ENCODE measurements at regions of chr15 and their contacts with region 1.

Region 1: GRCh38 chr15:98070137-98070536 is 109.6 kb downstream of the ARRDC4 start:
- DNase-seq: no peak
- H3K4me3 ChIP-seq: no peak overlapping the region
- H3K27ac ChIP-seq: no peak overlapping the region
- H3K4me1 ChIP-seq: no peaks in the 10 kb centered on the region
- H3K27me3 ChIP-seq: no peaks in the 10 kb centered on the region
- CTCF ChIP-seq: no peak
- POLR2A ChIP-seq: no peak

Region 2: DNA sequence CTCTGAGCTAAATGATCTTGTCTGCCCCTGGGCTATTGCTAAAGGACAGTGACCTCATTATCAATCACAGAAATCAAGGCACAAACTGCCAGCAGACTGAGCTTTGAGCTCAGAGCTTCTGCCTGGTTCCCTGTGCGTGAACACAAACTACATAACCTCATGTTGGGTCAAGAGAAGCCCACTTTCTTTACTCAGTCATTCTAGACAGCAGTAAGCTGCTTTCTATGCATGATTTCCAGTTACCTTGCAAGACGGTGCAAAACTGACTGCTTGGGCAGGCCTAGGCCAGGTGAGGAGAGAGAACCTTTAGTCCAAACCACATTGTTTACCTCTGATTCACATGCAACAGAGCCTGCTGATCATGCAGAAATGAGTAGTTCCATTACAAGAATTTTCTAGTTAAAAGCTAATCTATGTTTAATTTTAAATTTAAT is 34.5 kb before region 1 on chr15:
- intact Hi-C with region 1: loop called in 1 of 2 experiments (anchors 5 kb)
- DNase-seq: no peak
- H3K4me3 ChIP-seq: no peak overlapping the region
- H3K27ac ChIP-seq: no peak overlapping the region
- H3K4me1 ChIP-seq: no peaks in the 10 kb centered on the region
- H3K27me3 ChIP-seq: no peaks in the 10 kb centered on the region
- CTCF ChIP-seq: no peak
- POLR2A ChIP-seq: no peak

Region 3: GRCh38 chr15:98226578-98226977 is 156.4 kb after region 1 on chr15:
- intact Hi-C with region 1: no loop called
- DNase-seq: no peak
- H3K4me3 ChIP-seq: no peak overlapping the region
- H3K27ac ChIP-seq: no peak overlapping the region
- H3K4me1 ChIP-seq: no peaks in the 10 kb centered on the region
- H3K27me3 ChIP-seq: no peaks in the 10 kb centered on the region
- CTCF ChIP-seq: no peak
- POLR2A ChIP-seq: no peak

Region 4: GRCh38 chr15:98308117-98308516 is 238.0 kb after region 1 on chr15:
- intact Hi-C with region 1: no loop called
- DNase-seq: no peak
- H3K4me3 ChIP-seq: no peak overlapping the region
- H3K27ac ChIP-seq: no peak overlapping the region
- H3K4me1 ChIP-seq: no peaks in the 10 kb centered on the region
- H3K27me3 ChIP-seq: peaks cover 17% of the 10 kb centered on the region
- CTCF ChIP-seq: no peak
- POLR2A ChIP-seq: no peak

Measured in adrenal gland (tissue), 19 donors.